ENCODE measurements at regions of chr11 and their contacts with region 1.

Region 1: GRCh38 chr11:124837491-124837856 is 27.8 kb upstream of the ROBO3 start:
- DNase-seq: peak; percentile 90
- ATAC-seq: peak; percentile 82
- H3K4me3 ChIP-seq: no peak overlapping the region
- H3K27ac ChIP-seq: no peak overlapping the region
- H3K4me1 ChIP-seq: no peaks in the 10 kb centered on the region; the same call in 1 of the 2 replicates
- H3K27me3 ChIP-seq: peaks cover 49% of the 10 kb centered on the region
- CTCF ChIP-seq: peak; percentile 80
- POLR2A ChIP-seq: no peak
- RAD21 ChIP-seq: peak; percentile 69

Region 2: DNA sequence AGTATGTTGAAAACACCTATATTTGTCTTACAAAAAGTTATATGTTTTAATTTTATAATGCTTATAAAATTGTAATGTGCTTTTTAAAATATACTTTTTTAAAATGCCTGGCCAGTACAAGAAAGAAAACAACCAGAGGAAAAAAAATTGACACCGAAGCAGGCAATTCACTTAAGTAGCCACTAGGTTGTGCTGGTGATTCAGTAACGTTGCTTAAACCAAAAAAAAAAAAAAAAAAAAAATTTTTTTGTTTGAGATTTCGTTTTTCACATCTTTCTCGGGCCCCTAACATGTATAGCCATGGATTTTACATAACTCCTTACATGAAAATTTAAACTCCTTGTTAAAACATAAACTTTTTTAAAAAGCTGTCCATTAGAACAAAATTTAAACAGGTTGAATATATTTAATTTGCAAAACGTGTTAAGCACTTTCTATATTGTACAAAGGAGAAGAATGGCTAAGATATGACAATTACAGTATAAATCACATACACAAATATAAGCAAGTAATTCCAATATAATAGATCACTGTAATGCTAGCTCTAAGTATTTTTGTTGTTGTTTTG is 422.0 kb before region 1 on chr11:
- CTCF ChIA-PET with region 1: no interaction called
- POLR2A ChIA-PET with region 1: no interaction called
- dilution Hi-C with region 1: no loop called
- in situ Hi-C with region 1: no loop called
- intact Hi-C with region 1: loop called (anchors 2 kb)
- DNase-seq: peak; percentile 69
- ATAC-seq: peak; percentile 46; the same call in 1 of the 2 replicates
- H3K4me3 ChIP-seq: no peak overlapping the region
- H3K27ac ChIP-seq: no peak overlapping the region
- H3K4me1 ChIP-seq: no peaks in the 10 kb centered on the region
- H3K27me3 ChIP-seq: peaks cover 14% of the 10 kb centered on the region
- CTCF ChIP-seq: peak; percentile 78
- POLR2A ChIP-seq: no peak
- RAD21 ChIP-seq: peak; percentile 70

Region 3: DNA sequence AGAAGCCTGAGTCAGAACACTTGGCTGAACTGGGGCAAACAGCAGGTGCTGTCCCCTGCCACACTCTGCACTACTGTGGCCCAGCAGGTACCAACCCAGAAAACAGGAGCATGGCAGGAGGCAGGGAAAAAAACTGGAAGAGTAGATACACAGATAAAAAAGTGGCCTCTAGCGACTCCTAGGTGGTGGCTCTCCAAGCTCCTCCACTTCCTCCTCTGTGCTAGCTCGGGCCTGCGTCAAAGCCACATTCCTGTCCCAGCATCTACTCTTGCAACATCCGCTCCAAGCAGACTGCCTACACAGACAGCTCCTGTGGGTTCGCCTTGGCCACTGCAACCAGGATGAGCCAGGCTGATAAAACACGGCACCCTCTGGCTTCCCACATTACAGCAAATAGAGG is 301.0 kb before region 1 on chr11:
- CTCF ChIA-PET with region 1: no interaction called
- POLR2A ChIA-PET with region 1: no interaction called
- dilution Hi-C with region 1: no loop called
- in situ Hi-C with region 1: no loop called
- intact Hi-C with region 1: no loop called
- DNase-seq: peak; percentile 39
- ATAC-seq: no peak
- H3K4me3 ChIP-seq: no peak overlapping the region
- H3K27ac ChIP-seq: no peak overlapping the region
- H3K4me1 ChIP-seq: no peaks in the 10 kb centered on the region
- H3K27me3 ChIP-seq: no peaks in the 10 kb centered on the region
- CTCF ChIP-seq: no peak
- POLR2A ChIP-seq: no peak
- RAD21 ChIP-seq: no peak

Region 4: DNA sequence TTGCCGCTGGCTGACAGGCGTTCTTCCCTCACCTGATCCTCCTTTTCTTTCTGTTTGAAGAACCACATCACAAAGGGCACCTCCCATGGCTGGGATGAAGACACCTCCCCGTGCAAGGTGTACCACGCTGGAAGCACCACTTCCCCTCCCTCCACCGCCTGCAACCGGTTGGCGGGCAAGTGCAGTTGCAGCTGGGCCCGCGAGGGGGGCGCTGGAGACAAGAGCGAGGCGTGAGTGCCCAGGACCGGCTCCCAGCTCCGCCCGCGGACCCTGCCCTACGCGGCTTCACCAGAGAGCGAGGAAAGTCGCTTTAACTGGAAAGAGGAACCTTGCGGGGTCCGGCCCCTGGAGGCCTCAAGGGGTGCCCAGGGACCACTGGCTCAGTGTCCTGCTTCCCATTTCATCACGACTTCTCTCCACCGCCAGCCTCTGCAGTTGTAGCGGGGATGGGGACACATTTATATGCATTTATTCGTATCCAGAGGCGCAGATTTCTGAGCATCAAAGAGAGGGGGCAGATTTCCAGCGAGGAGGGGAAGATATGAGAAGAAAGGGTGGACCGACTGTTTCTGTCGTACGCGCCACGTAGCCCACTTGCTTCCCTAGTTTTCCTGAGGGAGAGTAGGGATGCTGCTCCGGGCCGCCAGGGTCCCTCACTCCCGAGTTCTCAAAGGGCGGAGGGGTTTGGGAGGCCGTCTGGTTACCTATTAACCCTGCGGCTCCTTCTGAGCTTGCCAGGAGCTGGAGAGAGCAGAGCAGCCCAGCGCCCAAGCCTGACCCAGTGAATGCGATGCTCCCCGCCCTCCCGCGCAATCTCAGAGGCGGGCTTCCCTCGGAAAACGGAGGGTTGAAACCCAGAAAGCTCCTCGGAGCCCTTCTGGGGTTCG is 78.9 kb before region 1 on chr11:
- CTCF ChIA-PET with region 1: interaction called, 4 read pairs
- POLR2A ChIA-PET with region 1: no interaction called
- dilution Hi-C with region 1: no loop called
- in situ Hi-C with region 1: loop called (anchors 10 kb)
- intact Hi-C with region 1: loop called (anchors 2 kb)
- DNase-seq: peak; percentile 44
- ATAC-seq: peak; percentile 81
- H3K4me3 ChIP-seq: peak overlapping the region; percentile 33
- H3K27ac ChIP-seq: no peak overlapping the region
- H3K4me1 ChIP-seq: peaks cover 5% of the 10 kb centered on the region
- H3K27me3 ChIP-seq: peaks cover 17% of the 10 kb centered on the region; the same call in 1 of the 2 replicates
- CTCF ChIP-seq: peak; percentile 52
- POLR2A ChIP-seq: no peak
- RAD21 ChIP-seq: peak; percentile 39

Region 5: GRCh38 chr11:124800226-124800929 is 37.1 kb before region 1 on chr11 and contains the start of gene MSANTD2:
- CTCF ChIA-PET with region 1: interaction called, 3 read pairs
- POLR2A ChIA-PET with region 1: no interaction called
- dilution Hi-C with region 1: no loop called
- in situ Hi-C with region 1: no loop called
- intact Hi-C with region 1: loop called (anchors 2 kb)
- DNase-seq: peak; percentile 79
- ATAC-seq: peak; percentile 92
- H3K4me3 ChIP-seq: peak within 1 kb of the TSS; percentile 68
- H3K27ac ChIP-seq: peak within 1 kb of the TSS; percentile 99
- H3K4me1 ChIP-seq: peaks cover 2% of the 10 kb centered on the region
- H3K27me3 ChIP-seq: no peaks in the 10 kb centered on the region
- CTCF ChIP-seq: no peak
- POLR2A ChIP-seq: peak; percentile 93
- RAD21 ChIP-seq: no peak
- total RNA-seq, gene MSANTD2: 5.0 and 6.4 TPM in 2 replicates

Region 6: DNA sequence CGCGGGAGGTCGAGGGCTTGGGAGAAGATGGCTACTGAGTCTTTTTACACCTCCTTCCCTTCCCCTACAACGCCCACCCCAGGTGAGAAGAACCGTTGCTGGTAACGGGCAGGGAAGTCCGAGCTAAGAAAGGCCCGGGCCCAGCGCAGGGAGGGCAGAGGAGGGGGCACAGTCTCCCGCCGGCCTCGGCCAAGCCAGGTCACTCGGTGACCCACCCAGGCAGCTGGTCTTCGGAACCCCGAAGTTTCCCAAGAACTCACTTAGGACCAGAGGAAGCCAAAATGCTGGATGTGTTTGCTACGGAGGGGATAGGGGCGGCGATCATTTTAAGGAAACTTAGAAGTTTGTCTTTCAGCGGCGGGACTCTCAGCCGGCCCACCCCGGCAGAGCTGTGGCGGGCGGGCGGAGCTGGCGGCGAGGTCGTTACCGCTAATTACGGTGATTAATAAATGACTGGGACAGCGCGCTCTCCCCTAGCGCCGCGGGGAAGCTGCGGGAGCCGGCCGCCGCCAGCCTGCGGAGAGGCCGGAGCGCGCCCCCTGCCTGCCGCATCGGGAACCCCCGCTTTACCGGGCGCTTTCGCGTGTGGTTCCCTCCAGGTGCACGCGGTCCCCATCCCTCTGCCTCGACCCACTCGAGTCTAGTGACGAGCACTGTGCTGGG is 28.6 kb after region 1 on chr11:
- CTCF ChIA-PET with region 1: interaction called, 8 read pairs
- POLR2A ChIA-PET with region 1: no interaction called
- dilution Hi-C with region 1: no loop called
- in situ Hi-C with region 1: no loop called
- intact Hi-C with region 1: loop called (anchors 1 kb)
- DNase-seq: peak; percentile 15
- ATAC-seq: peak; percentile 56
- H3K4me3 ChIP-seq: peak overlapping the region; percentile 20; the same call in 1 of the 2 replicates
- H3K27ac ChIP-seq: no peak overlapping the region
- H3K4me1 ChIP-seq: peaks cover 2% of the 10 kb centered on the region
- H3K27me3 ChIP-seq: peaks cover 97% of the 10 kb centered on the region
- CTCF ChIP-seq: peak; percentile 69
- POLR2A ChIP-seq: no peak
- RAD21 ChIP-seq: peak; percentile 42; the same call in 1 of the 2 replicates

Region 7: GRCh38 chr11:124902616-124903015 is 65.1 kb after region 1 on chr11:
- CTCF ChIA-PET with region 1: no interaction called
- POLR2A ChIA-PET with region 1: no interaction called
- dilution Hi-C with region 1: no loop called
- in situ Hi-C with region 1: no loop called
- intact Hi-C with region 1: no loop called
- DNase-seq: peak; percentile 40
- ATAC-seq: no peak
- H3K4me3 ChIP-seq: no peak overlapping the region
- H3K27ac ChIP-seq: no peak overlapping the region
- H3K4me1 ChIP-seq: peaks cover 28% of the 10 kb centered on the region
- H3K27me3 ChIP-seq: no peaks in the 10 kb centered on the region
- CTCF ChIP-seq: no peak
- POLR2A ChIP-seq: no peak
- RAD21 ChIP-seq: no peak

Region 8: DNA sequence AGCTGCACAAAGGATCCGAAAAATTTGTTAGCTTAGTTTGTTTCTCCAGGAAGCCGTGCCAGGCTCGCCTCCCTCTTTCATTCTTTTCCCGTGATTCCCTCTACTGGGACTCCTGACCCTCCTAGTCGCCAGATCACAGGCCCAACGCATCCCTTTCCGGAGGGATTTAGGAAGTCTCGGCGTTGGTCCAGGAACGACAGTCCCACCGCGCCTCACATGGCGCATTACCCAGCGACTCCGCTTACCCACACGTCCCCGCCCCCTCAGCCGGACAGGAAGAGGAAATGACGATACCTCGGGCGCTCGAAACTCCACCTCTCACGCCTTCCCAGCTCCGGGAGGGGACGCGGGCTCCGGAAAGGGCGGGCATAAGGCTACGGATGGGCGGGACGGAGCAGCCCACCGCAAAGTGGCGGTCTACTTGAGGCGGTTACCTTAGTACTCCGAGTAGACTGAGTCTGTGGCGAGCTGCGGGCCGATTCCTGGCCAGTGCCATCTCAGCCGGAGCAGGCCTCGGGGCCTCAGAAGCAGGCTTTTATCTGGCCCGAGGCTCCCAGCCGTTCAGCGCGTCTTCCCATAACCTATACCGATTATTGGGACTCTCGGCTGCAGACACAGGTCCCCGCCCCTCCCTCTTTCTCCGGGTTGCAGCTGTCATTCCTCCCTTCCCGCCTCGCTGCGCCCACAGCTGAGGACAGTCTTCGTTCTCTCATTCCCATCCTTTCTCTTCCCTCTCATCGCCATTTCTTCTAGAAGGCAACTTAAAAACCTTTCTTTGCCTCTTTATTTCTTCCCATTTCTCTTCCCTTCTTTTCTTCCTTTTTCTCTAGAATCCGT is 116.5 kb after region 1 on chr11 and contains the start of gene CCDC15:
- CTCF ChIA-PET with region 1: no interaction called
- POLR2A ChIA-PET with region 1: no interaction called
- dilution Hi-C with region 1: no loop called
- in situ Hi-C with region 1: no loop called
- intact Hi-C with region 1: loop called (anchors 2 kb)
- DNase-seq: peak; percentile 97
- ATAC-seq: peak; percentile 99
- H3K4me3 ChIP-seq: peak within 1 kb of the TSS; percentile 60
- H3K27ac ChIP-seq: peak within 1 kb of the TSS; percentile 75
- H3K4me1 ChIP-seq: peaks cover 2% of the 10 kb centered on the region; the same call in 1 of the 2 replicates
- H3K27me3 ChIP-seq: no peaks in the 10 kb centered on the region
- CTCF ChIP-seq: 0 out of 2 replicates have a peak, but pooled peaks have one; percentile 3
- POLR2A ChIP-seq: peak; percentile 90
- RAD21 ChIP-seq: peak; percentile 5; the same call in 1 of the 2 replicates
- total RNA-seq, gene CCDC15: 2.0 and 2.5 TPM in 2 replicates

Region 9: DNA sequence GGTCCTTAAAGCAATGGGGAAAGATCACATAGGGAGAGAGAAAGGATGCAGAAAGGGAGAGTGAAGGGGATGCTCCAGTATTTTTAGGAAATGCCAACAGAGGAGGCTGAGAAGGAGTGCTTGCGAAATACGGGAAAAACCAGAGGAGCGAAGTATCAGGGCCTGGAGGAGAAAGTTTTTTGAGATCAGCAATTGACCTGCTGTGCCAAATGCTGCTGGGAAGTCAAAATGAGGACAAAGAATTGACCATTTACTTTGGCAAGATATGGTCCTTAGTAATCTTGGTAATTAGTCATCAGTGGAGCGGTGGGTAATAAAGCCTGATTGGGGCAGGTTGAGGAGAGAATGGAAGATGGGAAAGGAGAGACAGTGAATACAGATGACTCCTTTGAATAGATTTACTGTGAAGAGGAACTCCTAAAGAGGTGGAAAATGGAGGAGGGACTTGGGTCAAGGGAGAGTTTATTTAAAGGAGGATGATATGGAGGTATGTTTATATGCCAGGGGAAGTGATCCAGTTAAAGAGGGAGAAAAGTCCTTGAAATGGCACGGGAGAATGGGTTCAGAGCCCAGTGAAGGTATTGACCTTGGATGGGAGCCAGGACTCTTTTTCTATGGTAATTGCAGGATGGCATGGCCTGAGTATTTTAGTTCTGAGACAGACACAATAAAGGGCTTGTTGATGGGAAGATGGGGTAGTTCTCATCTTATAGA is 438.6 kb after region 1 on chr11:
- CTCF ChIA-PET with region 1: no interaction called
- POLR2A ChIA-PET with region 1: no interaction called
- dilution Hi-C with region 1: no loop called
- in situ Hi-C with region 1: no loop called
- intact Hi-C with region 1: no loop called
- DNase-seq: peak; percentile 64
- ATAC-seq: no peak; the same call in 1 of the 2 replicates
- H3K4me3 ChIP-seq: no peak overlapping the region
- H3K27ac ChIP-seq: no peak overlapping the region
- H3K4me1 ChIP-seq: no peaks in the 10 kb centered on the region; the same call in 1 of the 2 replicates
- H3K27me3 ChIP-seq: no peaks in the 10 kb centered on the region; the same call in 1 of the 2 replicates
- CTCF ChIP-seq: no peak
- POLR2A ChIP-seq: no peak
- RAD21 ChIP-seq: no peak

Measured in IMR-90 (cell line).